Thyroid gland (tissue), 4 donors: ENCODE measurements at regions of chr16 and their contacts with region 1.

Region 1: DNA sequence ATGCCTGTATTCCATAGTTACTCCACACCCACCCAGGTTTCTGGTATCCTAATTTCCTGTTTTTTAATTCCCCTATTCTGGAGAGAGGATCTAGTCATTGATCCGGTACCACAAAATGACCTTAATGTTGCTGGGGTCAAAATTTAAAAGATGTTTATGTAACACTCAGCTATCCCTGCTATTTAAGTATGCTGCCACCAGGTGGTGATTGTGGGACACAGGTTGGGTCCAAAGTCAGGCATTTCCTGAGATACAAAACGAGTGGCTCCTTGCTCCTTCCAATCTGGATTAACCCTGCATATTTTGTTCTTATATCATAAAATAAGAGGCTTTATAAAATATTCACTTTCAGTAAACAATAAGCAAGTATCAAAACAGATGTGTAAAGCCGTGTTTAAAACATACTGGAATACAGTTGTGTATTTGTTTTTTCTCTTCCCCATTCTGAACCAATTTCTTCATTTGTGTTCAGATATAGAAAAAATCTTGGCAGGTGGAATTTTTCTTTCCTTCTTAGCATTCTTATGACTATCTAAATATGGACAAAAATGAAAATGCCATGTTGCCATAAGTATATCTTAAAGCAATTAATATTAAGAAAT is 16.3 kb downstream of the HS3ST4 start:
- DNase-seq: no peak
- H3K4me3 ChIP-seq: no peak overlapping the region
- H3K27ac ChIP-seq: no peak overlapping the region
- H3K4me1 ChIP-seq: no peaks in the 10 kb centered on the region
- H3K27me3 ChIP-seq: no peaks in the 10 kb centered on the region
- CTCF ChIP-seq: no peak
- POLR2A ChIP-seq: no peak

Region 2: GRCh38 chr16:25764466-25764865 is 56.4 kb after region 1 on chr16:
- intact Hi-C with region 1: loop called (anchors 10 kb)
- DNase-seq: no peak
- H3K4me3 ChIP-seq: no peak overlapping the region
- H3K27ac ChIP-seq: no peak overlapping the region
- H3K4me1 ChIP-seq: no peaks in the 10 kb centered on the region
- H3K27me3 ChIP-seq: no peaks in the 10 kb centered on the region
- CTCF ChIP-seq: no peak
- POLR2A ChIP-seq: no peak